Gastrocnemius medialis (tissue), 4 donors: ENCODE measurements at regions of chr15 and their contacts with region 1.

Region 1: GRCh38 chr15:93566762-93567161 is 477.8 kb upstream of the RGMA start:
- DNase-seq: peak in 1 of 2 donors; percentile 16
- ATAC-seq: no peak
- H3K4me3 ChIP-seq: no peak overlapping the region
- H3K27ac ChIP-seq: no peak overlapping the region
- H3K4me1 ChIP-seq: peaks cover 0 to 3% of the 10 kb centered on the region in 2 donors
- H3K27me3 ChIP-seq: no peaks in the 10 kb centered on the region
- CTCF ChIP-seq: no peak
- POLR2A ChIP-seq: no peak

Region 2: DNA sequence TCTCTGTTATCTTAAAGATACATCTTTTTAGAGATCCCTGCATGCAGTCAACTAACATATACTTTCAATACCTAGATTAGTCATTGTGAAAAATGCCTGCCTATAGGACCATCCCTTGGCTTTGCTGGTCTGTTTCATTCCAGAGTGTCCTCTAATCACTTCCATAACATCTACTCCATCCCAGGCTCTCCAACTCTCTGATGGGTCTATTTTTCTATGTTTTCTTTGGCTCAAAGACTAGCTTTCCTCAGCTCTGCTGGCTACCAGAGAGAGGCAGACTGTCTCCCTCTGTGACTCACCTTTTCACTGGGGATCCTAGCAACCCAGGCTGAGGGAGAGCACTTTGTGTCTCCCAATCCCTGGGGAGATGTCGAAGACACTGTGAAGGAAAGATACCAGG is 116.9 kb after region 1 on chr15:
- in situ Hi-C with region 1: no loop called
- intact Hi-C with region 1: no loop called
- DNase-seq: no peak
- ATAC-seq: no peak
- H3K4me3 ChIP-seq: no peak overlapping the region
- H3K27ac ChIP-seq: no peak overlapping the region
- H3K4me1 ChIP-seq: no peaks in the 10 kb centered on the region
- H3K27me3 ChIP-seq: no peaks in the 10 kb centered on the region
- CTCF ChIP-seq: no peak
- POLR2A ChIP-seq: no peak

Region 3: GRCh38 chr15:93974804-93975481 is 408.2 kb after region 1 on chr15:
- in situ Hi-C with region 1: no loop called
- intact Hi-C with region 1: loop called (anchors 10 kb)
- DNase-seq: peak in 1 of 2 donors; percentile 12
- ATAC-seq: peak; percentile 36 to 68
- H3K4me3 ChIP-seq: no peak overlapping the region
- H3K27ac ChIP-seq: no peak overlapping the region
- H3K4me1 ChIP-seq: peaks cover 0 to 4% of the 10 kb centered on the region in 2 donors
- H3K27me3 ChIP-seq: no peaks in the 10 kb centered on the region
- CTCF ChIP-seq: peak in 4 of 5 experiments; percentile 7 to 37 (median 28)
- POLR2A ChIP-seq: no peak